ENCODE measurements at regions of chr10 and their contacts with region 1.

Region 1: GRCh38 chr10:73576178-73576889 is 14.8 kb downstream of the USP54 start:
- DNase-seq: peak; percentile 89
- H3K4me3 Mint-ChIP-seq: peak overlapping the region; percentile 72
- H3K27ac Mint-ChIP-seq: peak overlapping the region; percentile 85
- H3K4me1 Mint-ChIP-seq: peaks cover 30% of the 10 kb centered on the region
- H3K27me3 Mint-ChIP-seq: no peaks in the 10 kb centered on the region
- CTCF ChIP-seq: no peak

Region 2: DNA sequence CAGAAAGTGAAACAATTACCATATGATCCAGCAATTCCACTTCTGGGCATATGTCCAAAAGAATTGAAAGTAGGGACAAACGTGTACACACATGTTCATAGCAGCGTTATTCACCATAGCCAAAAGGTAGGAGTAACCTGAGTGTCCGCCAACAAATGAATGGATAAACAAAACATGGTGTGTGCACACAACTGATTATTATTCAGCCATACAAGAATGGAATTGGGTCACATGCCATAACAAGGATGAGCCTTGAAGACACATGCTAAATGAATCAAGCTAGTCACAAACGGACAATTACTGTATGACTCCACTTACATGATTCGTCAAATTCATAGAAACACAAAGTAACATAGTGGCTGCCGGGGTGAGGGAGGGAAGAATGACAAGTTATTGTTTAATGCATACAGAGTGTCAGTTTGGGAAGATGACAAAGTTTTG is 686.9 kb before region 1 on chr10:
- CTCF ChIA-PET with region 1: no interaction called
- POLR2A ChIA-PET with region 1: no interaction called
- intact Hi-C with region 1: no loop called
- DNase-seq: peak; percentile 98
- H3K4me3 Mint-ChIP-seq: no peak overlapping the region
- H3K27ac Mint-ChIP-seq: peak overlapping the region; percentile 26
- H3K4me1 Mint-ChIP-seq: peaks cover 17% of the 10 kb centered on the region
- H3K27me3 Mint-ChIP-seq: no peaks in the 10 kb centered on the region
- CTCF ChIP-seq: no peak

Region 3: DNA sequence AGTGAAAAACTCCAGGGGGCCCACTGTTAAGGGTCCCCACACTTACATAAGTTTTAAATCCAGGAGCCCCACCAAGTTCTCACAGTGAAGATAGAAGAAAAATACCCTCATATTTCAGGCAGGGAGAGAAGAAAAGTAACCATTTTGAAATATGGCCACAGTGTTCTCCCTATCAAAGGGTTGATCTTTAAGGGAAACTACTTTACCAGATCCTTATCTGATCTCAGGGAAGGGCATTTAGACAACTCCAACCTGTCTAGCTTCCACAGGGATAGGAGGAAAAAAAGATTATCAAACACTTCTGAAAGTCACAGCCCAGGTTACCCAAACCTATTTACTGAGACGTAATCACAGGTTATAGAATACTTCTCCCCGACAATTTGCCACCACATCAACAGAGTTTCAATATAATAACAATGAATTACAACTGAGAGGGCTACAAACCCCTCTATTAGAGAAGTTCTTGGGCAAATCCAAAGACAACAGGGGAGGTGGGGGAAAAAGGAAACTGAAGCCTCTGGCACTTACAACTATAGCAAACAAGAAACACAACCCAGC is 244.0 kb before region 1 on chr10:
- CTCF ChIA-PET with region 1: no interaction called
- POLR2A ChIA-PET with region 1: no interaction called
- intact Hi-C with region 1: no loop called
- DNase-seq: no peak
- H3K4me3 Mint-ChIP-seq: no peak overlapping the region
- H3K27ac Mint-ChIP-seq: no peak overlapping the region
- H3K4me1 Mint-ChIP-seq: no peaks in the 10 kb centered on the region
- H3K27me3 Mint-ChIP-seq: peaks cover 22% of the 10 kb centered on the region
- CTCF ChIP-seq: no peak

Region 4: GRCh38 chr10:73586583-73586984 is 10.2 kb after region 1 on chr10:
- CTCF ChIA-PET with region 1: interaction called, 5 read pairs
- POLR2A ChIA-PET with region 1: interaction called, 43 read pairs
- intact Hi-C with region 1: no loop called
- DNase-seq: peak; percentile 49
- H3K4me3 Mint-ChIP-seq: no peak overlapping the region
- H3K27ac Mint-ChIP-seq: peak overlapping the region; percentile 41
- H3K4me1 Mint-ChIP-seq: peaks cover 35% of the 10 kb centered on the region
- H3K27me3 Mint-ChIP-seq: no peaks in the 10 kb centered on the region
- CTCF ChIP-seq: no peak

Region 5: GRCh38 chr10:73591935-73592699 is 15.8 kb after region 1 on chr10:
- CTCF ChIA-PET with region 1: interaction called, 5 read pairs
- POLR2A ChIA-PET with region 1: interaction called, 43 read pairs
- intact Hi-C with region 1: no loop called
- DNase-seq: peak; percentile 67
- H3K4me3 Mint-ChIP-seq: no peak overlapping the region
- H3K27ac Mint-ChIP-seq: peak overlapping the region; percentile 92
- H3K4me1 Mint-ChIP-seq: peaks cover 24% of the 10 kb centered on the region
- H3K27me3 Mint-ChIP-seq: no peaks in the 10 kb centered on the region
- CTCF ChIP-seq: no peak

Region 6: DNA sequence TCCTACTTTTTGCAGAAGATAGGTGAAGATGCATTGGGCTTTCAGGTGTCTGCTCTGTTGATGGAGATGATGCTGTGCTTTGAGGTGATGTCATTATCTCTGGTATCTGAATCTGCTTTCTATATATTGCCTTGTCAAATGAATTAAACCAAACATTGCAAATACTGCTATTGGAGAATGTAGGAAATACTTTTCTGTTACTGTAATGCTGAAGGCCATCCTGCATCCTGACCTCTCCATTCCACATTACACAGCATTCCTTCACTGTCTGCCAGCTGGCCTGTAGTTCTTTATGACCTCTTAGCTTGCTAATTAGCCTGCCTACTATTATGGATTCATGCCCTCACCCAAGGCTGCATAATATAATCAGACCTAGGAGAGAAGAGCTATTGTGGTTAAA is 494.8 kb after region 1 on chr10:
- CTCF ChIA-PET with region 1: no interaction called
- POLR2A ChIA-PET with region 1: no interaction called
- intact Hi-C with region 1: no loop called
- DNase-seq: no peak
- H3K4me3 Mint-ChIP-seq: no peak overlapping the region
- H3K27ac Mint-ChIP-seq: no peak overlapping the region
- H3K4me1 Mint-ChIP-seq: peaks cover 6% of the 10 kb centered on the region
- H3K27me3 Mint-ChIP-seq: no peaks in the 10 kb centered on the region
- CTCF ChIP-seq: no peak

Measured in MCF 10A (cell line).